ENCODE measurements at regions of chr11 and their contacts with region 1.

Region 1: DNA sequence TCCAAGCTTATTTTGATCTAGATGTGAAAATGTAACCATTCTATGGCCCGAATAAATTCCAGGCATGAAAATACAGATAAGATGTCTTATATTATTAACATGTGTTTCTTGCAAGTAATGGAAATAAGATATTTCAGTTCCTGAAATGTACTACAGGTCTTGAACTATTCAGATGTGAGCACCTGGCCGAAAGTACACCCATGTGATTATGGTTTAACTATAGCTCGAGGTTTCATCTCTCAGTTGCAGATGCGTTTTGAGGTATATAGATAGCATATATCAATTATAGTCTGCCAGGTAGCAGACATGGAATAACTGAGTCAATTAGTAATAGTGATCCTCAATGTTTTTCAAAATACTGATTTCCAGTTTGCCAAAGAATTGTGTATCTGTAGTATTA is 68.3 kb downstream of the DDIAS start:
- DNase-seq: no peak
- ATAC-seq: peak; percentile 21
- H3K4me3 ChIP-seq: no peak overlapping the region
- H3K4me3 Mint-ChIP-seq: peak overlapping the region; percentile 71
- H3K27ac ChIP-seq: no peak overlapping the region
- H3K27ac Mint-ChIP-seq: peak overlapping the region; percentile 86
- H3K4me1 ChIP-seq: peaks cover 17% of the 10 kb centered on the region
- H3K4me1 Mint-ChIP-seq: peaks cover 54% of the 10 kb centered on the region
- H3K27me3 ChIP-seq: no peaks in the 10 kb centered on the region
- H3K27me3 Mint-ChIP-seq: no peaks in the 10 kb centered on the region
- CTCF ChIP-seq: no peak

Region 2: GRCh38 chr11:82927254-82927880 is 42.4 kb before region 1 on chr11:
- CTCF ChIA-PET with region 1: no interaction called
- POLR2A ChIA-PET with region 1: interaction called, 6 read pairs
- intact Hi-C with region 1: loop called in 1 of 2 experiments (anchors 5 kb)
- DNase-seq: peak in 8 of 14 experiments; percentile 7 to 82 (median 44)
- ATAC-seq: peak; percentile 98
- H3K4me3 ChIP-seq: no peak overlapping the region
- H3K4me3 Mint-ChIP-seq: peak overlapping the region; percentile 1
- H3K27ac ChIP-seq: no peak overlapping the region
- H3K27ac Mint-ChIP-seq: peak overlapping the region; percentile 64
- H3K4me1 ChIP-seq: peaks cover 2% of the 10 kb centered on the region
- H3K4me1 Mint-ChIP-seq: peaks cover 44% of the 10 kb centered on the region
- H3K27me3 ChIP-seq: no peaks in the 10 kb centered on the region
- H3K27me3 Mint-ChIP-seq: no peaks in the 10 kb centered on the region
- CTCF ChIP-seq: peak; percentile 97